HCT116 (cell line): ENCODE measurements at regions of chr17 and their contacts with region 1.

Region 1: DNA sequence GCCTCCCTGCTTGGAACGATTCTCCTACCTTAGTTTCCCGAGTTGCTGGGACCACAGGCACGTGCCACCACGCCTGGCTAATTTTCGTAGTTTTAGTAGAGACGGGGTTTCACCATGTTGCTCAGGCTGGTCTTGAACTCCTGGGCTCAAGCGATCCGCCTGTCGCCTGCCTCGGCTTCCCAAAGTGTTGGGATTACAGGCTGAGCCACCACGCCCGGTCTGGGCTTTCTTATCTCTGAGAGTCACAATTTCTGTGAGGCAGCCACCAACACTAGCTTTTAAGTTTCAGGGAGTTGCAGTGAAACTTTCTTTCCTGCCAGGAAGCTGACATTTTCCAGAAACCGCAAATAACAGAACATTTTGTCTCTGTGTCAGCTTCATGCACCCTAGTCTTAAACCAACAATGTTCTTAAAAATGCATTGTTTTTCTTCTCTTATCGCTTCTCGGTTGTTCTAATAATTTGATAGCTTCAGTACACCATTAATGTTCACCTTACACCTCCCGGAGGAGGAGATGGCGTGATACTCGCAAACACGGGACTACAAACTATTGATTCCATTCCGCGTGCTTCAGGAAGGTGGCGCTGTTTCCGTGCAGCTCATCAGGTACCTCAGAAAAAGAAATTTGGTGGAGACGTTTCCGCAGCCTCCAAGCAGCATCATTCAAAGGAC is 7.4 kb upstream of the DHRS7B start:
- DNase-seq: peak; percentile 74
- ATAC-seq: peak; percentile 94
- H3K4me3 ChIP-seq: no peak overlapping the region
- H3K27ac ChIP-seq: no peak overlapping the region
- H3K4me1 ChIP-seq: peaks cover 6 to 10% of the 10 kb centered on the region in 2 experiments; a peak in 3 of 4 replicates
- H3K27me3 ChIP-seq: no peaks in the 10 kb centered on the region
- CTCF ChIP-seq: peak; percentile 73 to 95 (median 91); a peak in 5 of 6 replicates
- POLR2A ChIP-seq: no peak
- RAD21 ChIP-seq: peak; percentile 73

Region 2: GRCh38 chr17:21098934-21099689 is 20.3 kb before region 1 on chr17:
- CTCF ChIA-PET with region 1: interaction called, 14 read pairs
- POLR2A ChIA-PET with region 1: interaction called, 4 read pairs
- RAD21 ChIA-PET with region 1: no interaction called
- intact Hi-C with region 1: no loop called
- DNase-seq: peak; percentile 90
- ATAC-seq: peak; percentile 97
- H3K4me3 ChIP-seq: peak overlapping the region; percentile 64 to 85
- H3K27ac ChIP-seq: peak overlapping the region; percentile 49
- H3K4me1 ChIP-seq: peaks cover 4 to 23% of the 10 kb centered on the region in 2 experiments; a peak in 3 of 4 replicates
- H3K27me3 ChIP-seq: no peaks in the 10 kb centered on the region
- CTCF ChIP-seq: no peak
- POLR2A ChIP-seq: no peak
- RAD21 ChIP-seq: no peak

Region 3: GRCh38 chr17:21419299-21420239 is 300.2 kb after region 1 on chr17:
- CTCF ChIA-PET with region 1: no interaction called
- POLR2A ChIA-PET with region 1: no interaction called
- RAD21 ChIA-PET with region 1: no interaction called
- intact Hi-C with region 1: no loop called
- DNase-seq: no peak
- ATAC-seq: no peak
- H3K4me3 ChIP-seq: no peak overlapping the region
- H3K27ac ChIP-seq: no peak overlapping the region
- H3K4me1 ChIP-seq: no peaks in the 10 kb centered on the region
- H3K27me3 ChIP-seq: no peaks in the 10 kb centered on the region
- CTCF ChIP-seq: no peak
- POLR2A ChIP-seq: no peak
- RAD21 ChIP-seq: no peak